ENCODE measurements at regions of chr7 and their contacts with region 1.

Region 1: DNA sequence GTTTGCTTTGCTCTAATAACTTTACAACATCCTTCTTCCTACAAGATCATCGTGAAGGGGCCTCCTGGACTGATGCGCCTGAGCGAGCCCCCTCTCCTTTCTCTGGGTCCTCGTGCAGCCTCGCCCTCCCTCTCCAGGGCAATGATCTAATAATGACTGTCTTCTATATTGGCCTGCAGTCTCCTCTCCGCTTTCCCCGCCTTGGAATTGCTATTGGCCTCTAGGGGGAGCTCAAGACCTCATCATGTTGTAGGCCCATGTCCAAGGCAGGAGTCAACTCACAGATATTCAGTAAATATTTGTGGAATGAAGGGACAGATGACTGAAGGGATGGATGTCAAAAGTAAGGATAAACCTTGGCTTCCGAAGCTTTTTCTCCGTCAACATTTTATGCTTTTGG is 1180.3 kb downstream of the TYW1 start:
- DNase-seq: peak in 1 of 2 donors; percentile 52
- ATAC-seq: peak in 5 of 8 donors; percentile 42 to 67 (median 61)
- H3K4me3 ChIP-seq: no peak overlapping the region
- H3K27ac ChIP-seq: no peak overlapping the region
- H3K4me1 ChIP-seq: no peaks in the 10 kb centered on the region
- H3K27me3 ChIP-seq: peaks cover 0 to 3% (median 0%) of the 10 kb centered on the region in 7 donors
- CTCF ChIP-seq: peak; percentile 37 to 82 (median 74)

Region 2: GRCh38 chr7:68425377-68425776 is 248.4 kb after region 1 on chr7:
- intact Hi-C with region 1: loop called in 1 of 10 experiments (anchors 10 kb)
- DNase-seq: no peak
- ATAC-seq: no peak
- H3K4me3 ChIP-seq: no peak overlapping the region
- H3K27ac ChIP-seq: no peak overlapping the region
- H3K4me1 ChIP-seq: peaks cover 0 to 8% (median 0%) of the 10 kb centered on the region in 9 donors
- H3K27me3 ChIP-seq: no peaks in the 10 kb centered on the region
- CTCF ChIP-seq: peak in 6 of 9 donors; percentile 9 to 31 (median 21)

Region 3: GRCh38 chr7:69932034-69932628 is 1755.2 kb after region 1 on chr7:
- intact Hi-C with region 1: loop called in 2 of 10 experiments (anchors 10 kb)
- DNase-seq: peak in 1 of 2 donors; percentile 23
- ATAC-seq: peak in 3 of 8 donors; percentile 33 to 55 (median 54)
- H3K4me3 ChIP-seq: no peak overlapping the region
- H3K27ac ChIP-seq: no peak overlapping the region
- H3K4me1 ChIP-seq: peaks cover 0 to 15% (median 12%) of the 10 kb centered on the region in 9 donors
- H3K27me3 ChIP-seq: no peaks in the 10 kb centered on the region
- CTCF ChIP-seq: peak; percentile 55 to 79 (median 69)